Activated CD4-positive, alpha-beta memory T cell treated with anti-CD3 and anti-CD28 coated beads for 36 hours (primary cell): ENCODE measurements at regions of chr10 and their contacts with region 1.

Region 1: DNA sequence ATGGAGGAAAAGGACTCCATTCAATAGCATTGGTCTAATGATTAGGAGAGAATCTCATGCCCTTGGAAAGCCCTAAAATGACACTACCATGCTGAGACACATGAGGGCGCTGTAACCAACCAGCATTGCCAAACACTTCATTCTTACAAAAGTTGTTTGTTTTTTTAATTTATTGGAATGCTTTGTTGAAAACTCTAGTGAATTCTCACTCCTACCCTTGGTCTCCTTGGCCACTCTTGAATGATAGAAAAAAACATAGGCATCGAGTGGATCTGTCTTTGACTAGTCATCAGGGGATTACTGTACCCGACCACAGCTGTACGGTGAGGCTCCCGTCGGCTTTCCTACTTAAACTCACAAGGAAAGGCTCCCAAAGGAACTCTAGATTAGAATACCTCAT is 29.3 kb upstream of the ADD3 start:
- DNase-seq: peak; percentile 76
- H3K4me3 Mint-ChIP-seq: no peak overlapping the region
- H3K27ac Mint-ChIP-seq: no peak overlapping the region
- H3K4me1 Mint-ChIP-seq: peaks cover 4% of the 10 kb centered on the region
- H3K27me3 Mint-ChIP-seq: no peaks in the 10 kb centered on the region

Region 2: GRCh38 chr10:109835257-109835656 is 143.2 kb before region 1 on chr10:
- CTCF ChIA-PET with region 1: no interaction called
- POLR2A ChIA-PET with region 1: no interaction called
- intact Hi-C with region 1: no loop called
- DNase-seq: no peak
- H3K4me3 Mint-ChIP-seq: no peak overlapping the region
- H3K27ac Mint-ChIP-seq: no peak overlapping the region
- H3K4me1 Mint-ChIP-seq: no peaks in the 10 kb centered on the region
- H3K27me3 Mint-ChIP-seq: peaks cover 6% of the 10 kb centered on the region

Region 3: DNA sequence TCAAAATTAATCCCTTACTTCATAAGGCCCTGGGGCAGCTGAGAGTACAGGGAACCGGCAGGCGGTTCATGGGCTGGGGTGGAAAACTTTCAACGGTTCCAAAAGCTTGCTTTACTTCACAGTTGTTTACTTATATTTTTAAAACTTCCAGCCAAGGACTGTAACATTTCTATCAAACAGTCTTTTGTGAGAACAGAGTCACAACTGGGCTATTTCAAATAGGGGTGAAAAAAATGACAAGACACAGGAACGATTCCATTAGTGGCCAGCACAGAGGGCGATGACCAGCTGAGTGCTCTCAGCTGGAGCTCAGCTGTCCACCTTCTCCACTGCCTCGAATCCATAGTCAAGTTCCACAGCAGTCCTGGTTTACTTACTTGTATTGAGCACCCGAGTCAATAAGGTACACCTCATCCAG is 103.3 kb before region 1 on chr10:
- CTCF ChIA-PET with region 1: no interaction called
- POLR2A ChIA-PET with region 1: no interaction called
- intact Hi-C with region 1: no loop called
- DNase-seq: no peak
- H3K4me3 Mint-ChIP-seq: no peak overlapping the region
- H3K27ac Mint-ChIP-seq: no peak overlapping the region
- H3K4me1 Mint-ChIP-seq: no peaks in the 10 kb centered on the region
- H3K27me3 Mint-ChIP-seq: no peaks in the 10 kb centered on the region

Region 4: DNA sequence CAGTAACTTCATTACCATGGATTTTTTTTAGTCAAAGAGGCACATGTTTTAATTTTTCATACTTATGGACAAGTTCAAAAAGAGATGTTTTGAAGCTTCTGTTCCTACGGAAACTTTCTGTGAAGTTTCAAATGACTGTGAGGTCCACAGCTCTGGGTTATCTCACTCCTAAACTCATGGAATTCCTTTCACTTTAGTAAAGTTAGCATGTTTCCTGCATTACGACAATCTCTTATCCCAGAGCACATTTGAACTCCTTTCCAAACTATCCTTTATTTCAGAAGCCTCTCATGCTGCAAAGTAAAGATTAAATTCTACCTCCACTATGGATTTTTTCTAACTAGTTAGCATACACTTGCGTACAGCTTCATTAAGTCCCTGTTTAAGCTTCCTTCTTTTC is 14.0 kb after region 1 on chr10:
- CTCF ChIA-PET with region 1: interaction called, 10 read pairs
- POLR2A ChIA-PET with region 1: no interaction called
- intact Hi-C with region 1: no loop called
- DNase-seq: no peak
- H3K4me3 Mint-ChIP-seq: no peak overlapping the region
- H3K27ac Mint-ChIP-seq: no peak overlapping the region
- H3K4me1 Mint-ChIP-seq: peaks cover 14% of the 10 kb centered on the region
- H3K27me3 Mint-ChIP-seq: no peaks in the 10 kb centered on the region

Region 5: DNA sequence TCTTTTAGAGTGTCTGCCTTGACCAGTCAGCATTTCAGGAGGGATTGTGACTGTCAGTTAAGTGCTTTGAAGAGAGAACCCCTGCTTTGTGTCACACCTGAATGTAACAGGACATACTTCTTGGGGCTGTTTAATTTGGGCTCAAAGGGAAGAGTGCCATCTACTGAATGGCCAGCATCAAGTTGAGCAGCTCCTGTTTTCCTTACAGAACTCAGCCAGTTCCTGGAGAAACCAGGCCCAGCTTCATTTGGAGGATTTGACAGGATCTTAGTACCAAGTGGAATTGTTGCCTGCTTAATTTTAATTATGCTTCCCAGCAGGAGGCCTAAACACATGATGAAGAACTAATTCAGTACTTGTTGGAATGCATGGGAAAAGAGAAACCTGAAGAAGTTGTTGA is 37.6 kb after region 1 on chr10:
- CTCF ChIA-PET with region 1: interaction called, 9 read pairs
- POLR2A ChIA-PET with region 1: no interaction called
- intact Hi-C with region 1: loop called (anchors 1 kb)
- DNase-seq: no peak
- H3K4me3 Mint-ChIP-seq: no peak overlapping the region
- H3K27ac Mint-ChIP-seq: peak overlapping the region; percentile 62
- H3K4me1 Mint-ChIP-seq: peaks cover 79% of the 10 kb centered on the region
- H3K27me3 Mint-ChIP-seq: no peaks in the 10 kb centered on the region